Activated CD8-positive, alpha-beta T cell treated with anti-CD3 and anti-CD28 coated beads for 36 hours (primary cell): ENCODE measurements at regions of chr7 and their contacts with region 1.

Region 1: GRCh38 chr7:87797798-87798403 is 78.3 kb downstream of the SLC25A40 start:
- DNase-seq: no peak
- ATAC-seq: peak; percentile 69
- H3K4me3 Mint-ChIP-seq: no peak overlapping the region
- H3K27ac Mint-ChIP-seq: no peak overlapping the region
- H3K4me1 Mint-ChIP-seq: no peaks in the 10 kb centered on the region
- H3K27me3 Mint-ChIP-seq: peaks cover 8% of the 10 kb centered on the region
- CTCF ChIP-seq: peak; percentile 77

Region 2: GRCh38 chr7:87886875-87887274 is 89.0 kb after region 1 on chr7:
- CTCF ChIA-PET with region 1: interaction called, 25 read pairs
- POLR2A ChIA-PET with region 1: no interaction called
- intact Hi-C with region 1: loop called (anchors 5 kb)
- DNase-seq: no peak
- ATAC-seq: no peak
- H3K4me3 Mint-ChIP-seq: no peak overlapping the region
- H3K27ac Mint-ChIP-seq: no peak overlapping the region
- H3K4me1 Mint-ChIP-seq: peaks cover 5% of the 10 kb centered on the region
- H3K27me3 Mint-ChIP-seq: no peaks in the 10 kb centered on the region
- CTCF ChIP-seq: peak; percentile 51

Region 3: DNA sequence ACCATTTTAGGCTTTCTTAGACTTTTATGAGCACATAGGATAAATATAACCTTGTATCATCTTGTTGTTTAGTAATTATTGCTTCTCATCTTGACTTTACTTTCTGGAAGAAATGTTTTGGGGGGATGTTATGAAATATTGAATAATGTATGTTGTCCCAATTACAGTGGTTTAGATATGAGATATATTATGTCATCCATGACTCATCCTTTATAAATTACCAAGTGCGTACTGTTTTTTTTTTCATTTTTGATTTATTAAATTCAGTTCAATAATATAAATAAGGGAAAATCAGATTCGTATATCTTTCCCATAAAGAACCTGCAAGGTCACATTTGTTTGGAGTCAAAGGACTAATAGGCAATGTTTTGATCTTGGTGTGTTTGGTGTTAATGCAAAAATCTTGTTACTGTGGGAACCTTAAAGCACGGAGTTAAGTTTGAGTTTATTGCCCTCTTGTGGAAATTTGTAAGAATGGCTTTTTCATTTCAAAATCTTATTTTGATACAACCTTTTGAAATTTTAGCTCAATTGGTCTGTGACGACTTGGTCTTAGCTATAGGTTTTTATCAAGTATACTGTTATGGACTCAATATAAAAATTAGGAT is 313.3 kb after region 1 on chr7:
- CTCF ChIA-PET with region 1: interaction called, 9 read pairs
- POLR2A ChIA-PET with region 1: no interaction called
- intact Hi-C with region 1: loop called (anchors 5 kb)
- DNase-seq: no peak
- ATAC-seq: no peak
- H3K4me3 Mint-ChIP-seq: no peak overlapping the region
- H3K27ac Mint-ChIP-seq: no peak overlapping the region
- H3K4me1 Mint-ChIP-seq: peaks cover 2% of the 10 kb centered on the region
- H3K27me3 Mint-ChIP-seq: no peaks in the 10 kb centered on the region
- CTCF ChIP-seq: peak; percentile 72

Region 4: DNA sequence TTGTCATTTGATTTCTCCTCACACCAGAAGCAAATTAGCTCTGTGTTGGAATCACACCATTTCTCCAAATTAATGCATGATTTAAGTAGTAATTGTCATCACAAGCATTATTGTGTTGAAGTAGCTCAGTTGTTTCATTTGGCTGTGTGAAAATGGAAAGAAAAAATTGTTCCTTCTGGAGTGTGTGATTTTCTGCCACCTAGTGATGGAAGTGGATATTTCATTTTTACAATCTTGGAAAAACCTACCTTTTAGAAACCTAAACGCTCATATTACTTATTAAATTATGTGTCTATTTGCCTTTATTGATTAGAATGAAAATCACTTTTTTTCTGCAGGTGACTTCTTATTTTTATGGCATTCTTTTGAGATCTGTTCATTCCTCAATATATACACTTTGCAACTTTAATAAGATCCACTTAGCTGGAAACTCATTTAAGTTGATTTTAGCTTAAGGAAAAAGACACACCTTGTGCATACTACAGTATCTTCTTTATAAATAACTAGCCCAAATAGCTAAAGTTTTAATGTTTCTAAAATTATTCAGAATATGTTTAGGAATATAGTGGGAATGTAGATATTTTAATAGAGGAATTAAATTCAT is 371.9 kb after region 1 on chr7:
- CTCF ChIA-PET with region 1: interaction called, 5 read pairs
- POLR2A ChIA-PET with region 1: no interaction called
- intact Hi-C with region 1: loop called (anchors 5 kb)
- DNase-seq: no peak
- ATAC-seq: no peak
- H3K4me3 Mint-ChIP-seq: no peak overlapping the region
- H3K27ac Mint-ChIP-seq: no peak overlapping the region
- H3K4me1 Mint-ChIP-seq: no peaks in the 10 kb centered on the region
- H3K27me3 Mint-ChIP-seq: no peaks in the 10 kb centered on the region
- CTCF ChIP-seq: peak; percentile 60